Stomach (tissue), 19 donors: ENCODE measurements at regions of chr4 and their contacts with region 1.

Region 1: DNA sequence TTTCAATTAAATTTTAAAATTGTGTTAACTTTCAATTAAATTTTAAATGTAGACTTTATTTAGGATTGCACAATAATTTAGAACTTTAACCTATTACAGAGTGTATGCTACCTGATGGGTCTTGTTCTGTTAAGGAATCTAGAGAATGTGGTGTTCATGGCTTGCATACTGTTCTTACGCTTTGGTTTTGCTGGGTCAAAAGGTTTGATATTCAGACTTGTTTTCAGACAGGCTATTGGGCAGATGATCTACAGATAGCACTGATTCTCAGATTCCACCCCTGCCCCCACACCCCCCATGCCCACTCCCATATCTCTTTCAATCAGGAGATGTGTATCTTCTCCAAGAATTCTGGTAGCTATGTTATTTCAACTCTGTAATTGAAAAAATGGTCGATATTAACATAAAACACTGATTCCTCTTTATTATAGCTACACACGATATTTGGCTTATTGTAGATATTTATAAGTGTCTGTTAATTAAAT is 267.3 kb upstream of the LCORL start:
- DNase-seq: no peak
- H3K4me3 ChIP-seq: no peak overlapping the region
- H3K27ac ChIP-seq: no peak overlapping the region
- H3K4me1 ChIP-seq: no peaks in the 10 kb centered on the region
- H3K27me3 ChIP-seq: no peaks in the 10 kb centered on the region
- CTCF ChIP-seq: no peak
- EP300 ChIP-seq: no peak
- POLR2A ChIP-seq: no peak

Region 2: GRCh38 chr4:18463987-18464559 is 175.2 kb after region 1 on chr4:
- intact Hi-C with region 1: loop called (anchors 5 kb)
- DNase-seq: no peak
- H3K4me3 ChIP-seq: no peak overlapping the region
- H3K27ac ChIP-seq: no peak overlapping the region
- H3K4me1 ChIP-seq: no peaks in the 10 kb centered on the region
- H3K27me3 ChIP-seq: no peaks in the 10 kb centered on the region
- CTCF ChIP-seq: no peak
- EP300 ChIP-seq: no peak
- POLR2A ChIP-seq: no peak